Heart right ventricle (tissue), 16 donors: ENCODE measurements at regions of chr17 and their contacts with region 1.

Region 1: GRCh38 chr17:72136693-72137092 is 15.9 kb downstream of the SOX9 start:
- DNase-seq: no peak
- ATAC-seq: peak in 2 of 8 donors; percentile 21 to 30
- H3K4me3 ChIP-seq: no peak overlapping the region
- H3K27ac ChIP-seq: peak overlapping the region in 3 of 10 donors; percentile 34 to 52 (median 52)
- H3K4me1 ChIP-seq: peaks cover 0 to 14% (median 0%) of the 10 kb centered on the region in 9 donors
- H3K27me3 ChIP-seq: peaks cover 0 to 9% (median 0%) of the 10 kb centered on the region in 7 donors
- CTCF ChIP-seq: no peak

Region 2: GRCh38 chr17:72171703-72172667 is 35.3 kb after region 1 on chr17:
- intact Hi-C with region 1: no loop called
- DNase-seq: no peak
- ATAC-seq: peak; percentile 13 to 68 (median 54)
- H3K4me3 ChIP-seq: peak overlapping the region in 1 of 10 donors; percentile 2
- H3K27ac ChIP-seq: peak overlapping the region in 7 of 10 donors; percentile 23 to 67 (median 46)
- H3K4me1 ChIP-seq: peaks cover 0 to 22% (median 0%) of the 10 kb centered on the region in 9 donors
- H3K27me3 ChIP-seq: peaks cover 0 to 2% (median 0%) of the 10 kb centered on the region in 7 donors
- CTCF ChIP-seq: peak in 3 of 9 donors; percentile 31 to 35 (median 35)

Region 3: DNA sequence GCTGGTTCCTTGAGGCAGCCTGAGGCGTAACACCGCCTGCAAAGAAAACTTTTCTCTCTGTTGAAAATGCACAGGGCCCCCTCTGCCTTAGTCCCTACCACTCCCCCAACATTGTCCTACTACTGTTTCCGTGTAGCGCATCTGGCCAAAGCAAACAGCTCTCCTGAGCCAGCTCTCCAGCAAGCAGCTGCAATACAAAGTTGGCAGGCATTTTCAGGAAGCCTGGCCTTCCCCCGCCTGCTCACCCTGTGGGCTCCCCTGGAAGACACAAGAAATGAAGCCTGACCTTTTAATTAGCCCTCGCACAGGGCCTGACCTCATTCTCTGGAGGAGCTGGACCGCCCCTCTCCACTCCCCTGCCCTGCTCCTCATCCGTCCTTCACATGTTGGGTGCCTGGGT is 50.9 kb after region 1 on chr17:
- intact Hi-C with region 1: no loop called
- DNase-seq: peak; percentile 56 to 74
- ATAC-seq: peak; percentile 47 to 76 (median 66)
- H3K4me3 ChIP-seq: no peak overlapping the region
- H3K27ac ChIP-seq: peak overlapping the region in 6 of 10 donors; percentile 22 to 70 (median 44)
- H3K4me1 ChIP-seq: peaks cover 0 to 52% (median 0%) of the 10 kb centered on the region in 9 donors
- H3K27me3 ChIP-seq: peaks cover 0 to 6% (median 0%) of the 10 kb centered on the region in 7 donors
- CTCF ChIP-seq: no peak

Region 4: DNA sequence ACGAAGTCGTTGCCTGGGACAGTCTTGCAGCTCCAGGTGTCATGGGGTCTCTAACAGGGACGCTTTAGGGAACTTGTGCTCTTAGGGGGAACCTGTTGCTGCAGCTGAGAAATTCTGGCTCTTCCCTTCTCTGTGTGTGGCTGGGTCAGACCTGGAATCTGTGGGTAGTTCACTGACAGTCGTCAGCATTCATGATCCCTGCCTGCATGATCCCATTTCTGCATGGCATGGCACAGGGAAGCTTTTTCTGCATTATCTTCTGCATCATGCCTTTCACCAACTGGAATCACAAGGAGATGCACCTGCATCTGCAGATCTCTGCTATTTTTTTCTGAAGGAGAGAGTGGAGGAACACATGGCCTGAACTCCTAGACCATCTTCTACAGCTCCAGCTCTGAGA is 69.7 kb after region 1 on chr17:
- intact Hi-C with region 1: no loop called
- DNase-seq: no peak
- ATAC-seq: no peak
- H3K4me3 ChIP-seq: no peak overlapping the region
- H3K27ac ChIP-seq: no peak overlapping the region
- H3K4me1 ChIP-seq: peaks cover 0 to 10% (median 0%) of the 10 kb centered on the region in 9 donors
- H3K27me3 ChIP-seq: peaks cover 0 to 31% (median 26%) of the 10 kb centered on the region in 7 donors
- CTCF ChIP-seq: no peak

Region 5: DNA sequence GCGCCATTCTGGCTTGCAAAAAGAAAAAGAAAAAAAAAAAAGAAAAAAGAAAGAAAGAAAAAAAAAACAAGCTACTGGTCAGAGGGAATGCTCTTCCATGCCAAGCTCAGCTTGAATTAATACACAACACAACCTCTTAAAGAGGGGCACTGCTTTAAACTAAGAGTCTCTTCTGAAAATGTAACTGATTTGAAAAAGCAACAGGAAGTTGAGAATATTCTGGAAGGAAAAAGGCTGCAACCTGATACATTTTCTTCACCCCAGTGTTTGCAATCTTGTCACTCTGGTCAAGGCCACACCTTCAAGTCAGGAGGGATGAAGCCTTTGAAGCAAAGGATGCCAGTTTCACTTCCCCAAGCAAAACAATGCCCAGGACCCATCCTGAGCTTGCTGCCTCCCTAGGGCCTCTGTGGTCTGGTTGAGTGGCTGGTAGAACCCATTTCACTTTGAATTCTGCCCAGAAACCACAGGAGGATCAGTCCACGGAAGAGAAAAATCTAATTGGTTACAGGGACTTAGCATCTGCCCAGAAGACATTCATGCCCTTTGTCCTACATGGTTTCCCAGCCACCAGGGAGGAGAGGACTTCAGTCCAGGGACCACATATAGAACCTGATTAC is 373.8 kb after region 1 on chr17:
- intact Hi-C with region 1: loop called in 1 of 10 experiments (anchors 10 kb)
- DNase-seq: no peak
- ATAC-seq: no peak
- H3K4me3 ChIP-seq: no peak overlapping the region
- H3K27ac ChIP-seq: no peak overlapping the region
- H3K4me1 ChIP-seq: peaks cover 0 to 11% (median 5%) of the 10 kb centered on the region in 9 donors
- H3K27me3 ChIP-seq: no peaks in the 10 kb centered on the region
- CTCF ChIP-seq: no peak